ENCODE measurements at regions of chr1 and their contacts with region 1.

Region 1: GRCh38 chr1:246724016-246724730 is at the start of gene SCCPDH:
- DNase-seq: peak; percentile 88
- H3K4me3 ChIP-seq: peak within 1 kb of the TSS; percentile 92
- H3K27ac ChIP-seq: peak within 1 kb of the TSS; percentile 88
- H3K4me1 ChIP-seq: peaks cover 10% of the 10 kb centered on the region
- H3K27me3 ChIP-seq: no peaks in the 10 kb centered on the region
- CTCF ChIP-seq: no peak
- total RNA-seq, gene SCCPDH: 40.3 and 41.7 TPM in 2 replicates

Region 2: GRCh38 chr1:246782120-246782900 is 58.1 kb after region 1 on chr1:
- CTCF ChIA-PET with region 1: no interaction called
- POLR2A ChIA-PET with region 1: interaction called, 18 read pairs
- intact Hi-C with region 1: no loop called
- DNase-seq: no peak
- H3K4me3 ChIP-seq: no peak overlapping the region
- H3K27ac ChIP-seq: peak overlapping the region; percentile 30
- H3K4me1 ChIP-seq: no peaks in the 10 kb centered on the region
- H3K27me3 ChIP-seq: no peaks in the 10 kb centered on the region
- CTCF ChIP-seq: no peak